ENCODE measurements at regions of chr6 and their contacts with region 1.

Region 1: DNA sequence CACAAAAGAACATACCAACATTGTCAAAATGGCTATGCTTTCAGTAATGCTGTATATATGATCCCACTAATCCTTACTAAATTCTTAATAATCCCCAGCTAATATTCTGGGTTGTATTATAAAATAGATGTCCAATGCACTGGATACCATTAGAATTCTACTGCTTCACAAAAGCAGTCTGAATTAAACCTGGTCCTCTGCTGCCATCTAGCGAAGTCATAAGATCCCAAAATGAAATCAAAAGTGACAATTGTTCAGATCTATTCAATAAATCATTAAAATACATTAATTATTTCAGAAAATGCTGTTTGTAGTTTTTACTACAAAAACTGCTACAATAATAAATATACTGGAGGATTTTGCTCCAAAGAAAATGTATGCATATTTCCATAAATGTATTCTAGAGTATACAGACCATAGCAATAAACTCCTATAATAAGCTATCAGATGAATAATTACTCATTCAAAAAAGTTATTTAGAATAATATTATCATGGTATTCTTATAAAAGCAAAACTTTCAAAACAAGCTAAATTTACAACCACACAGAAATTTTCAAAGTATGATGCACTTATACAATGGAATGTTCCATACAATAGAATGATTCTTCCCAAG is 92.6 kb downstream of the RNGTT start:
- DNase-seq: peak; percentile 39
- ATAC-seq: peak; percentile 78
- H3K4me3 ChIP-seq: no peak overlapping the region
- H3K27ac ChIP-seq: no peak overlapping the region
- H3K4me1 ChIP-seq: peaks cover 10% of the 10 kb centered on the region
- H3K27me3 ChIP-seq: no peaks in the 10 kb centered on the region
- CTCF ChIP-seq: peak; percentile 46 to 70 (median 55); a peak in 5 of 6 replicates
- EP300 ChIP-seq: no peak
- POLR2A ChIP-seq: no peak
- RAD21 ChIP-seq: peak; percentile 89

Region 2: DNA sequence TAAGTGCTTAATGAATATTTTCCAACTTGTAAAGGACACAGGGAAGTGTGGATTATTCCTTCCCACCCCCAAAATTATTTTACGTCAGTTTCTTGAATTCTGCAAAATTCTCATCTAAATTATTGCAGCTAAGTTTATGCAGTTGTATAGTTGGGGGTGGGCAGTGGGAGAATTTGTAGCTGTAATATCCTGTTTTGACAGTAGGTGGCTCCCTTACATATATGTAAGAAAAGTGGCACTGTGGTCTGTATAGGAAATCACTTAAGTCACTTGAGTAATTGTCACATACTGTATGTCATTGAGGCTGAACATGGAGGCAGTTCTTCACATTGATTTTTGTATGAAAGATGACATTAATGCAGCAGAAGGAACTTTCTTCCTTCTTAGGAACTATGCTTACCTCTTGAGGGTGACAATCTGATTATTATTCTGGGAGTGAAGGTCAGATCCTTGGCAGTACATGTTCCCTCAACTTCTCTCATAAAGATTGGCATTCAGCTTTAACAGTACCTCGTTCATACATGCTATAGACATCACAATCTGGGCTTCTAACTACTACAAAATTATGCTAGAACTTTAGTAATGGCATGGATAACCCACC is 1477.7 kb before region 1 on chr6:
- CTCF ChIA-PET with region 1: interaction called, 37 read pairs
- POLR2A ChIA-PET with region 1: no interaction called
- RAD21 ChIA-PET with region 1: interaction called, 46 read pairs
- SMC1A ChIA-PET with region 1: interaction called, 39 read pairs
- in situ Hi-C with region 1: loop called (anchors 5 kb)
- intact Hi-C with region 1: loop called (anchors 5 kb)
- DNase-seq: no peak
- ATAC-seq: peak; percentile 84
- H3K4me3 ChIP-seq: no peak overlapping the region
- H3K27ac ChIP-seq: no peak overlapping the region
- H3K4me1 ChIP-seq: no peaks in the 10 kb centered on the region
- H3K27me3 ChIP-seq: no peaks in the 10 kb centered on the region
- CTCF ChIP-seq: peak; percentile 55 to 63 (median 58); a peak in 5 of 6 replicates
- EP300 ChIP-seq: no peak
- POLR2A ChIP-seq: no peak
- RAD21 ChIP-seq: peak; percentile 78

Region 3: GRCh38 chr6:87935196-87935595 is 935.6 kb before region 1 on chr6:
- CTCF ChIA-PET with region 1: interaction called, 94 read pairs
- POLR2A ChIA-PET with region 1: interaction called, 3 read pairs
- RAD21 ChIA-PET with region 1: interaction called, 81 read pairs
- SMC1A ChIA-PET with region 1: interaction called, 118 read pairs
- in situ Hi-C with region 1: no loop called
- intact Hi-C with region 1: no loop called
- DNase-seq: no peak
- ATAC-seq: no peak
- H3K4me3 ChIP-seq: no peak overlapping the region
- H3K27ac ChIP-seq: no peak overlapping the region
- H3K4me1 ChIP-seq: peaks cover 2% of the 10 kb centered on the region
- H3K27me3 ChIP-seq: no peaks in the 10 kb centered on the region
- CTCF ChIP-seq: no peak
- EP300 ChIP-seq: no peak
- POLR2A ChIP-seq: no peak
- RAD21 ChIP-seq: no peak

Region 4: GRCh38 chr6:88238065-88238464 is 632.8 kb before region 1 on chr6:
- CTCF ChIA-PET with region 1: interaction called, 24 read pairs
- POLR2A ChIA-PET with region 1: no interaction called
- RAD21 ChIA-PET with region 1: interaction called, 13 read pairs
- SMC1A ChIA-PET with region 1: interaction called, 32 read pairs
- in situ Hi-C with region 1: no loop called
- intact Hi-C with region 1: loop called (anchors 1 kb)
- DNase-seq: peak; percentile 33
- ATAC-seq: peak; percentile 92
- H3K4me3 ChIP-seq: no peak overlapping the region
- H3K27ac ChIP-seq: no peak overlapping the region
- H3K4me1 ChIP-seq: peaks cover 3% of the 10 kb centered on the region; the same call in 1 of the 2 replicates
- H3K27me3 ChIP-seq: no peaks in the 10 kb centered on the region
- CTCF ChIP-seq: peak; percentile 64 to 77 (median 66); a peak in 5 of 6 replicates
- EP300 ChIP-seq: no peak
- POLR2A ChIP-seq: no peak
- RAD21 ChIP-seq: peak; percentile 97

Region 5: GRCh38 chr6:88761237-88762031 is 109.4 kb before region 1 on chr6:
- CTCF ChIA-PET with region 1: interaction called, 5 read pairs
- POLR2A ChIA-PET with region 1: interaction called, 3 read pairs
- RAD21 ChIA-PET with region 1: interaction called, 20 read pairs
- SMC1A ChIA-PET with region 1: interaction called, 12 read pairs
- in situ Hi-C with region 1: no loop called
- intact Hi-C with region 1: no loop called
- DNase-seq: peak; percentile 77
- ATAC-seq: peak; percentile 80
- H3K4me3 ChIP-seq: no peak overlapping the region
- H3K27ac ChIP-seq: peak overlapping the region; percentile 94
- H3K4me1 ChIP-seq: peaks cover 13% of the 10 kb centered on the region
- H3K27me3 ChIP-seq: no peaks in the 10 kb centered on the region
- CTCF ChIP-seq: peak; percentile 26 to 42 (median 37); a peak in 4 of 6 replicates
- EP300 ChIP-seq: peak; percentile 56 to 67; a peak in 2 of 4 replicates
- POLR2A ChIP-seq: no peak
- RAD21 ChIP-seq: peak; percentile 71

Region 6: DNA sequence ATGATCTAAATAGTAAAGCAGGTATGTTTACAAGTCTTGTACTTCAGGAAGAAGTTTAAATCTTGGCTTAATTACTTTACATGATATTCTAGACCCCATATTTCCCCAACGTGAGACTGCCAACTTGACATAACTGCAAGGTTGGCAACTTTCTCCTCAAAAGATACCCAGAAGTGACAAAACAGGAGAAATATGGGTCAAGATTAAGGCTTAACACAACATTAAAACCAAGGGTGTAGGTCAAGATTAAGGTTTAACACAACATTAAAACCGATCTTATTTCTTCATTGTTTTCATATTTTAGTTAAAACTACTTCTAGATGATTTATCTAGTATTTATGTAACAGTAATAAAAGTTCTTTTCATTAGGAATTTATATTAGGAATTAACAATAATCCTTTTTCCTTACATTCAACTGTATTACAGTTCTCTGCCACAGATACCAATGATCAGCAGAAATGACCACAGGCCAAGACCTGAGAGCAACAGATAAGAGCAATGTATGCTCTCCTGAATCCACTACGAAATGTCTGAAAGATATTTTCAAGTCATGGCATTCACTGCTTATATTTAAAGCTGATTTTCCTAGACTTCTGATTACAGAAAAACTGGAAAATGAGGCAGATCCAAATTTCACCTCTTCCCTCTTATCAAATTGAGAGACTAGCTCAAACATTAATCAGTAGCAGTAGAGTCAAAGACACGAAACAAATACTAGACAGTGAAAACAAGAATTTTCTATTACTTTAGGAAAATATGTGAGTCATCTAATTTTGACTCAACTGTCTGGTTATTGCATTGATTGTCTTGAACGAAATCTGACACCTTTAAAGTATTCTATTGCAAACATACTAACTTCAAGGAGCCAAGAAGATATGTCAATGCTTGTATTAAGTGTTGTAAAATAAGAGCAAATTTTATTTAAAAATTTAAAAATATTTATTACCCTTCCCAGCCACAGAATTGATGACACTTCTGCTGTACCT is 20.3 kb after region 1 on chr6:
- CTCF ChIA-PET with region 1: interaction called, 10 read pairs
- POLR2A ChIA-PET with region 1: no interaction called
- RAD21 ChIA-PET with region 1: interaction called, 4 read pairs
- SMC1A ChIA-PET with region 1: interaction called, 8 read pairs
- in situ Hi-C with region 1: no loop called
- intact Hi-C with region 1: no loop called
- DNase-seq: no peak
- ATAC-seq: no peak
- H3K4me3 ChIP-seq: no peak overlapping the region
- H3K27ac ChIP-seq: no peak overlapping the region
- H3K4me1 ChIP-seq: no peaks in the 10 kb centered on the region
- H3K27me3 ChIP-seq: no peaks in the 10 kb centered on the region
- CTCF ChIP-seq: no peak
- EP300 ChIP-seq: no peak
- POLR2A ChIP-seq: no peak
- RAD21 ChIP-seq: no peak

Region 7: GRCh38 chr6:89035252-89036106 is 164.7 kb after region 1 on chr6:
- CTCF ChIA-PET with region 1: no interaction called
- POLR2A ChIA-PET with region 1: no interaction called
- RAD21 ChIA-PET with region 1: no interaction called
- SMC1A ChIA-PET with region 1: no interaction called
- in situ Hi-C with region 1: no loop called
- intact Hi-C with region 1: no loop called
- DNase-seq: no peak
- ATAC-seq: no peak
- H3K4me3 ChIP-seq: no peak overlapping the region
- H3K27ac ChIP-seq: no peak overlapping the region
- H3K4me1 ChIP-seq: no peaks in the 10 kb centered on the region
- H3K27me3 ChIP-seq: no peaks in the 10 kb centered on the region
- CTCF ChIP-seq: no peak
- EP300 ChIP-seq: no peak
- POLR2A ChIP-seq: no peak
- RAD21 ChIP-seq: no peak

Region 8: GRCh38 chr6:89675949-89676748 is 805.3 kb after region 1 on chr6:
- CTCF ChIA-PET with region 1: no interaction called
- POLR2A ChIA-PET with region 1: no interaction called
- RAD21 ChIA-PET with region 1: no interaction called
- SMC1A ChIA-PET with region 1: no interaction called
- in situ Hi-C with region 1: no loop called
- intact Hi-C with region 1: no loop called
- DNase-seq: no peak
- ATAC-seq: no peak
- H3K4me3 ChIP-seq: no peak overlapping the region
- H3K27ac ChIP-seq: no peak overlapping the region
- H3K4me1 ChIP-seq: no peaks in the 10 kb centered on the region
- H3K27me3 ChIP-seq: no peaks in the 10 kb centered on the region
- CTCF ChIP-seq: no peak
- EP300 ChIP-seq: no peak
- POLR2A ChIP-seq: no peak
- RAD21 ChIP-seq: no peak